Uterus (tissue), 4 donors: ENCODE measurements at regions of chr14 and their contacts with region 1.

Region 1: DNA sequence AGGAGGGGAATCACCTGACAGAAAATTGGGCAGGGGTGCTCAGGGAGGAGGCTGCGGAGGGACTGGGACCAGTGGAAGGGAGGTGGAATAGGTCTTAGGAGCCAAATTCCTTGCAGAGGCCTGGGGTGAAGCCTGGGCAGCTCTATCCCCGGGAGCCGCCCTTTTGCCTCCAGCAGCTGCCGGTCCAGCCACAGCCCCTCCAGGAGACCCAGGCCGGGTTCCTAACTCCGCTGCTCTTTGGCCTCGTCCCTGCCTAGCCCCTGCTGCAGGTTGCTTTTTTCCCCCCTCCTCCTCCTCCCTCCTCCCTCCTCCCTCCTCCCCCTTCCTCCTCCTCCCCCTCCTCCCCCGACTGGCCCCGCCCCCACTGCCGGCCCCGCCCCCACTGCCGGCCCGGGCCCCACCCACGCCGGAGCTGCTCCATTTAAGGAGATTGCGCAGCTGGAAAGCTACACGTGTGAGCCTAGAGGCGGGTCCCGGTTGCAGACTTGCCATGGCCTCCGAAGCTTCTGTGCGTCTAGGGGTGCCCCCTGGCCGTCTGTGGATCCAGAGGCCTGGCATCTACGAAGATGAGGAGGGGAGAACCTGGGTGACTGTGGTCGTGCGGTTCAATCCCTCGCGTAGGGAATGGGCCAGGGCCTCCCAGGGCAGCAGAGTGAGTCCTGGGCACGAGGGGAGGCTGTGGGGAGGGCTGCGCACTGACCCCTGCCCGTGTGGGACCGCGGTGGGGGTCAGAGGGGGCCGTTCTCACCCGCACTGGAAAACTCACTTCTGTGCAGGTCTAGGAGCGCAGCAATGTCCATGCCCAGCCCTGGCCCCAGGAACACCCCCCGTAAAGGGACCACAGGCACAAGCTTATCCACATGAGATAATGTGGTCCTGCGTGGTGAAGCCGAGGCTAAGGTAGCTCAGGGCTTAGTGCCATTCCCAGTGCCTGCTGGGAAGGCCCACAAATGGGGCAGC is at the start of gene TCL1B:
- DNase-seq: no peak
- H3K4me3 ChIP-seq: no peak within 1 kb of the TSS
- H3K27ac ChIP-seq: no peak within 1 kb of the TSS
- H3K4me1 ChIP-seq: no peaks in the 10 kb centered on the region
- H3K27me3 ChIP-seq: no peaks in the 10 kb centered on the region
- CTCF ChIP-seq: no peak
- POLR2A ChIP-seq: no peak
- total RNA-seq, gene TCL1B: 0.28 TPM in 1 of 4 donors, not detected in the others

Region 2: DNA sequence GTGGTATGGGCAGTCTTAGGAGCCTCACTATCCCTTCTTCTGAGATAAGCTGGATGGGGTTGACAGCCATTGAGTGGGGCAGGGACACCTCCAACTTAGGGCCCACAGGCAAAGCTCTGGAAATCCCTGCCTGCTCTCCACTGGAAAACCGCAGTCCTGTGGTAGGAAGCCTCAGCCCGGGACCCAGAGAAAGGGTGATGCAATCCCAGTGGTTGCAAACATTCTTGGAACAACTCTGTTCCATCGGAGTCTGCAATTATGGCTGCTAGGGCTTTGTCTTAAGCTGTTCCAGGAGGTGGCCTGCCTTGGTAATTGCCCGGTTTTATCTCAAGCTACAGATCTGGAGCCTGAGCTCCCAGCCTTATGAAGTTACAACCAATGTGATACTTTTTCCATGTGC is 662.4 kb before region 1 on chr14:
- intact Hi-C with region 1: no loop called
- DNase-seq: no peak
- H3K4me3 ChIP-seq: no peak overlapping the region
- H3K27ac ChIP-seq: no peak overlapping the region
- H3K4me1 ChIP-seq: no peaks in the 10 kb centered on the region
- H3K27me3 ChIP-seq: no peaks in the 10 kb centered on the region
- CTCF ChIP-seq: no peak
- POLR2A ChIP-seq: no peak

Region 3: DNA sequence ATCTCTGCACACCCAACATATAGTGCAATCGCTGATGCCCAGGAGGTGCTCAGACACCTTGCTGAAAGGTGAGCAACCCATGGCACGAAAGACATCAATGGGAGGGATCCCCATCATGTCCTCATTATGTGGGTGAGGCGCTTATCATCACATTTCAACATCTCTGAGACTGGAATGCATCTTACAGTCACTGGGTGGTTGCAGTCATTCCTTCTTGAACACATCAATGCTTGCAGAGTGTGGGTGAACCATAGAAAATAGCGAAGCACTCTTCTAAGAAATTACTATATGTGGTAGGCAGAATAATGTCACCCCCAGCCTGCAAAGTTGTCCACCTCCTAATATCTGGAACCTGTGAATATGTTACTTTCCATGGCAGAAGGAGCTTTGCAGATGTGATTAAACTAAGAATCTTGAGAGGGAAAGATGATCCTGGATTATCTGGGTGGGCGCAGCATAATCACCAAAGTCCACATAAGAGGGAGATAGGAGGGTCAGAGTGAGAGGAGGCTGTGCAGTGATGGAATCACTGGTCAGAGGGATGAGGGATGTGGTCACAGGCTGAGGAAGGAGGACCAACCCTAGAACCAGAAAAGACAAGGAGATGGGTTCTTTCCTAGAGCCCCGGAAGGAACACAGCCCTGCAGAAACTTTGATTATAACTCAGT is 100.2 kb before region 1 on chr14:
- intact Hi-C with region 1: loop called (anchors 5 kb)
- DNase-seq: no peak
- H3K4me3 ChIP-seq: no peak overlapping the region
- H3K27ac ChIP-seq: no peak overlapping the region
- H3K4me1 ChIP-seq: no peaks in the 10 kb centered on the region
- H3K27me3 ChIP-seq: no peaks in the 10 kb centered on the region
- CTCF ChIP-seq: no peak
- POLR2A ChIP-seq: no peak

Region 4: DNA sequence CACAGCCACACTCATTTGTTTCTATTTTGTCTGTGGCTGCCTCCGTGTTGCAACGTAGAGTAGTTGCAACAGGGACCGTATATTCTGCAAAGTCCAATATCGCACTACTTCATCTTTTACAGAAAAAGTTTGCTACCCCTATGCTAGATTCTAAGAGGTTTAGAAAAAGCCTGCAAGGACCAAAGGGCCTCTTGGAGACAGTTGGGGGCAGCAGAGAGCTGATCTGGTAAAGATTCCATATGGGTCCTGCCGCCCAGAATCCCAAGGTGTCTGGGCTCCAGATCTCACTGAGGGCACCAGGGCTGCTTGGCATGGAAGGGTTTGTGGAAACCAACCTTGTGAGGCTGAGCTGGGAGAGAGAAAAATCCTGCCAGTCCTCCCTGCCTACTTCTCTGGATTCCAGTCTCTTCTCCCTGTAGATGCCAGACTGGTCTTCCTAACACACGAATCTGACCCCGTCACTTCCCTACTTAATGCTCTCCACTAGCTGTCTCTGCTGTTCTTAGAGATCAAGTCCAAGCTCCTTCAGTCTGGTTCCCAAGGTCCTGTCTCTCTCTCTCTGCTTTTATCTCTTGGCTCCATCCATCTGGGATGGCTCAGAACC is 76.8 kb before region 1 on chr14:
- intact Hi-C with region 1: no loop called
- DNase-seq: no peak
- H3K4me3 ChIP-seq: no peak overlapping the region
- H3K27ac ChIP-seq: no peak overlapping the region
- H3K4me1 ChIP-seq: no peaks in the 10 kb centered on the region
- H3K27me3 ChIP-seq: no peaks in the 10 kb centered on the region
- CTCF ChIP-seq: peak in 3 of 4 experiments; percentile 7 to 27 (median 17)
- POLR2A ChIP-seq: no peak

Region 5: GRCh38 chr14:95770777-95771176 is 84.5 kb after region 1 on chr14:
- intact Hi-C with region 1: no loop called
- DNase-seq: no peak
- H3K4me3 ChIP-seq: no peak overlapping the region
- H3K27ac ChIP-seq: no peak overlapping the region
- H3K4me1 ChIP-seq: no peaks in the 10 kb centered on the region
- H3K27me3 ChIP-seq: no peaks in the 10 kb centered on the region
- CTCF ChIP-seq: no peak
- POLR2A ChIP-seq: no peak